CD4-positive, alpha-beta memory T cell (primary cell): ENCODE measurements at regions of chr5 and their contacts with region 1.

Region 1: GRCh38 chr5:67202828-67203227 is 6.2 kb upstream of the CD180 start:
- DNase-seq: no peak
- H3K4me3 ChIP-seq: no peak overlapping the region
- H3K4me3 Mint-ChIP-seq: peak overlapping the region in 7 of 8 donors; percentile 50 to 78 (median 65)
- H3K27ac ChIP-seq: no peak overlapping the region
- H3K27ac Mint-ChIP-seq: peak overlapping the region; percentile 80 to 95 (median 86)
- H3K4me1 ChIP-seq: peaks cover 85% of the 10 kb centered on the region
- H3K4me1 Mint-ChIP-seq: peaks cover 60 to 98% (median 77%) of the 10 kb centered on the region in 4 donors
- H3K27me3 ChIP-seq: no peaks in the 10 kb centered on the region
- H3K27me3 Mint-ChIP-seq: no peaks in the 10 kb centered on the region

Region 2: GRCh38 chr5:67215583-67216471 is 13.0 kb after region 1 on chr5:
- CTCF ChIA-PET with region 1: interaction called, 23 read pairs
- POLR2A ChIA-PET with region 1: interaction called, 27 read pairs
- intact Hi-C with region 1: no loop called
- DNase-seq: peak; percentile 72 to 82 (median 80)
- H3K4me3 ChIP-seq: peak overlapping the region; percentile 10 to 44
- H3K4me3 Mint-ChIP-seq: peak overlapping the region; percentile 52 to 91 (median 82)
- H3K27ac ChIP-seq: peak overlapping the region; percentile 52
- H3K27ac Mint-ChIP-seq: peak overlapping the region; percentile 94 to 99 (median 98)
- H3K4me1 ChIP-seq: peaks cover 65% of the 10 kb centered on the region
- H3K4me1 Mint-ChIP-seq: peaks cover 57 to 69% (median 60%) of the 10 kb centered on the region in 4 donors
- H3K27me3 ChIP-seq: no peaks in the 10 kb centered on the region
- H3K27me3 Mint-ChIP-seq: no peaks in the 10 kb centered on the region

Region 3: GRCh38 chr5:67268231-67269021 is 65.6 kb after region 1 on chr5:
- CTCF ChIA-PET with region 1: no interaction called
- POLR2A ChIA-PET with region 1: no interaction called
- intact Hi-C with region 1: no loop called
- DNase-seq: no peak
- H3K4me3 ChIP-seq: no peak overlapping the region
- H3K4me3 Mint-ChIP-seq: no peak overlapping the region
- H3K27ac ChIP-seq: no peak overlapping the region
- H3K27ac Mint-ChIP-seq: no peak overlapping the region
- H3K4me1 ChIP-seq: no peaks in the 10 kb centered on the region
- H3K4me1 Mint-ChIP-seq: no peaks in the 10 kb centered on the region
- H3K27me3 ChIP-seq: no peaks in the 10 kb centered on the region
- H3K27me3 Mint-ChIP-seq: peaks cover 0 to under 1% of the 10 kb centered on the region in 2 donors